ENCODE measurements at regions of chr1 and their contacts with region 1.

Region 1: DNA sequence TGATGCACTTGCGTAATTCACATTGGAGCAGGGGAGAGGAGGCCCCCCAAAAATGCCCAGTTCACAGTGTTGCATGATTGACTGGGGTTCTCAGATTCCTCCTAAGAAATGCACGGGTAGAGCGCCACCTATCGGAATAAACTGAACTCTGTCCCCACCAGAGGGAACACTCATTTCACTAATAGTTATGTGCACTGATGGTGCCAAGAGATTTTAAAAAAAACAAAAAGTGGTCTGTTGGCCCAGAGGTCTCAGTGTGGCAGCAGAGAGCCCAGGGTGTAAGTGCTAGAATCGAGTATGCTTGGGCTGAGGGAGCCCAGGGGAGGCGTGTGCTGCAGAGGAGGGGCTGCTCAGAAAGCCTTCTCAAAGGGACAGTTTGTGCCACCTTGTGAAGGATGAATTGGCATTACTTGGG is 6.9 kb downstream of the PINK1 start:
- DNase-seq: peak; percentile 59
- H3K4me3 ChIP-seq: no peak overlapping the region
- H3K27ac ChIP-seq: no peak overlapping the region
- H3K4me1 ChIP-seq: no peaks in the 10 kb centered on the region
- H3K27me3 ChIP-seq: no peaks in the 10 kb centered on the region
- CTCF ChIP-seq: peak; percentile 85

Region 2: GRCh38 chr1:20358761-20359263 is 281.4 kb before region 1 on chr1:
- intact Hi-C with region 1: no loop called
- DNase-seq: peak; percentile 90
- H3K4me3 ChIP-seq: no peak overlapping the region
- H3K27ac ChIP-seq: peak overlapping the region; percentile 22
- H3K4me1 ChIP-seq: peaks cover 4% of the 10 kb centered on the region
- H3K27me3 ChIP-seq: no peaks in the 10 kb centered on the region
- CTCF ChIP-seq: no peak

Region 3: DNA sequence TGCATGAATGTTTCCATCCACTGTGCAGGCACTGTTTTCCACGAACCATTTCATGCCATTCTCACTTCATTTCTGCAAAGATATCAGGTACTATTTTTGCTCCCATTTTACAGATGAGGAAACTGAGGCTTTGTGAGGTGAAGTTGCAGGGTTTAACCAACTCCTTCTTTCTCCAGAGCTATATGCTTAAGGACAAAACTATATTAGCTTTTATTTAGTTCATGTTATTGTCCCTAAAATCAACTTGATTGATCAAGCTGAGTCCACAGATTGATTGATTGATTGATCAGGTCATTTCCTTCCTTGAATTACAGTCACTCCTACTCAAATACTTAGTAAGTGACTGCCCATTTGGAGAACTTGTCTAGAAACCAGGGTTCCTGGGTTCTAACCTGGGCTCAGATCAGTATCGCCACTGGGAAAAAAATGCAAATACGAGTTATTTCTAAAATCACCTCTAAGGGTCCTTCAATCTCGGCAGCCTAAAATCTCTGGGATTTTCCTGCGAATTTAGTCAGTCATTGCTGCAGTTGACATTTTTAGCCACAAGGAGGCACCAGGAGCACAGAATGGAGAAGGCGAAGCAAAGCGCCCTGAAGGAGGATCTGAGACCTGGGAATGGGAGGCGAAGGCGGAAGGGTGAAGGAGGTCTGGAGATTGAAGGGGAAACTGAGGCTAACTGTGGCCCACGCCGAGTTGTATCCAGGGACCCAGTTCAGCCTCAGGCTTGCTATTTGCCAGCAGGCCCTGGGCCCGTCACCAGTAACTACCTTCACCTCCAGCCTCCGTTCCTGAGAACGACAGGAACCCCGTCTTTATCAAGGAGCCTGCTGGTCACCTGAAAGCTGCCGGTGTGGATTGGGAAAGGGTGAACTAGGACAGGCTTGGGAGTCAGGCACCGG is 118.0 kb before region 1 on chr1:
- intact Hi-C with region 1: loop called (anchors 5 kb)
- DNase-seq: peak; percentile 88
- H3K4me3 ChIP-seq: no peak overlapping the region
- H3K27ac ChIP-seq: no peak overlapping the region
- H3K4me1 ChIP-seq: no peaks in the 10 kb centered on the region
- H3K27me3 ChIP-seq: no peaks in the 10 kb centered on the region
- CTCF ChIP-seq: peak; percentile 75

Region 4: GRCh38 chr1:20574686-20575540 is 65.3 kb before region 1 on chr1:
- intact Hi-C with region 1: loop called (anchors 2 kb)
- DNase-seq: peak; percentile 95
- H3K4me3 ChIP-seq: no peak overlapping the region
- H3K27ac ChIP-seq: no peak overlapping the region
- H3K4me1 ChIP-seq: no peaks in the 10 kb centered on the region
- H3K27me3 ChIP-seq: no peaks in the 10 kb centered on the region
- CTCF ChIP-seq: peak; percentile 49

Region 5: GRCh38 chr1:20727384-20728316 is 87.5 kb after region 1 on chr1:
- intact Hi-C with region 1: no loop called
- DNase-seq: no peak
- H3K4me3 ChIP-seq: no peak overlapping the region
- H3K27ac ChIP-seq: no peak overlapping the region
- H3K4me1 ChIP-seq: peaks cover 3% of the 10 kb centered on the region
- H3K27me3 ChIP-seq: peaks cover 35% of the 10 kb centered on the region
- CTCF ChIP-seq: no peak

Measured in colonic mucosa (tissue), 4 donors.